Activated T-helper 2 cell treated with anti-CD3 and anti-CD28 coated beads, Interferon-gamma antibody, Interleukin-2, Interleukin-4, amounts not matched to agents 10 μg/mL and 5 μg/mL and 100 μg/mL, durations not matched to agents 14 hours and 24 hours and 36 hours (primary cell): ENCODE measurements at regions of chr11 and their contacts with region 1.

Region 1: GRCh38 chr11:108654994-108655631 is 9.8 kb upstream of the DDX10 start:
- DNase-seq: no peak
- H3K4me3 Mint-ChIP-seq: no peak overlapping the region
- H3K27ac Mint-ChIP-seq: no peak overlapping the region
- H3K4me1 Mint-ChIP-seq: no peaks in the 10 kb centered on the region
- H3K27me3 Mint-ChIP-seq: peaks cover 35% of the 10 kb centered on the region

Region 2: GRCh38 chr11:108008656-108009496 is 646.2 kb before region 1 on chr11 and contains the start of gene CUL5:
- intact Hi-C with region 1: loop called (anchors 5 kb)
- DNase-seq: peak; percentile 86
- H3K4me3 Mint-ChIP-seq: peak within 1 kb of the TSS; percentile 91
- H3K27ac Mint-ChIP-seq: peak within 1 kb of the TSS; percentile 94
- H3K4me1 Mint-ChIP-seq: peaks cover 16% of the 10 kb centered on the region
- H3K27me3 Mint-ChIP-seq: no peaks in the 10 kb centered on the region
- total RNA-seq, gene CUL5: 33.7 and 34.2 TPM in 2 replicates

Region 3: DNA sequence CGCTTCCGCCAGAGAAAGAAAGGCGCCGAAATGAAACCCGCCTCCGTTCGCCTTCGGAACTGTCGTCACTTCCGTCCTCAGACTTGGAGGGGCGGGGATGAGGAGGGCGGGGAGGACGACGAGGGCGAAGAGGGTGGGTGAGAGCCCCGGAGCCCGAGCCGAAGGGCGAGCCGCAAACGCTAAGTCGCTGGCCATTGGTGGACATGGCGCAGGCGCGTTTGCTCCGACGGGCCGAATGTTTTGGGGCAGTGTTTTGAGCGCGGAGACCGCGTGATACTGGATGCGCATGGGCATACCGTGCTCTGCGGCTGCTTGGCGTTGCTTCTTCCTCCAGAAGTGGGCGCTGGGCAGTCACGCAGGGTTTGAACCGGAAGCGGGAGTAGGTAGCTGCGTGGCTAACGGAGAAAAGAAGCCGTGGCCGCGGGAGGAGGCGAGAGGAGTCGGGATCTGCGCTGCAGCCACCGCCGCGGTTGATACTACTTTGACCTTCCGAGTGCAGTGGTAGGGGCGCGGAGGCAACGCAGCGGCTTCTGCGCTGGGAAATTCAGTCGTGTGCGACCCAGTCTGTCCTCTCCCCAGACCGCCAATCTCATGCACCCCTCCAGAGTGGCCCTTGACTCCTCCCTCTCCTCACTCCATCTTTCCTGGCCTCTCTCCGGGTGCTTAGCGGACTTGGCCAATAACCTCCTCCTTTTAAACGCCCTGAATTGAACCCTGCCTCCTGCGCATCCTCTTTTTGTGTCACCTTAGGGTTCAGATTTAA is 432.2 kb before region 1 on chr11 and contains the start of gene ATM:
- intact Hi-C with region 1: no loop called
- DNase-seq: peak; percentile 99
- H3K4me3 Mint-ChIP-seq: no peak within 1 kb of the TSS
- H3K27ac Mint-ChIP-seq: no peak within 1 kb of the TSS
- H3K4me1 Mint-ChIP-seq: peaks cover 46% of the 10 kb centered on the region
- H3K27me3 Mint-ChIP-seq: no peaks in the 10 kb centered on the region
- total RNA-seq, gene ATM: 34.1 and 34.7 TPM in 2 replicates

Region 4: GRCh38 chr11:108743851-108744250 is 88.7 kb after region 1 on chr11:
- intact Hi-C with region 1: no loop called
- DNase-seq: no peak
- H3K4me3 Mint-ChIP-seq: no peak overlapping the region
- H3K27ac Mint-ChIP-seq: no peak overlapping the region
- H3K4me1 Mint-ChIP-seq: peaks cover 5% of the 10 kb centered on the region
- H3K27me3 Mint-ChIP-seq: no peaks in the 10 kb centered on the region